Activated CD4-positive, alpha-beta memory T cell treated with anti-CD3 and anti-CD28 coated beads, Interleukin-2, amount 10 ng/mL, durations not matched to agents 7 days and 5 days (primary cell): ENCODE measurements at regions of chr12 and their contacts with region 1.

Region 1: GRCh38 chr12:1993341-1993740 is 10.9 kb downstream of the DCP1B start:
- DNase-seq: no peak
- H3K4me3 Mint-ChIP-seq: no peak overlapping the region
- H3K27ac Mint-ChIP-seq: peak overlapping the region; percentile 52
- H3K4me1 Mint-ChIP-seq: peaks cover 45% of the 10 kb centered on the region
- H3K27me3 Mint-ChIP-seq: no peaks in the 10 kb centered on the region

Region 2: DNA sequence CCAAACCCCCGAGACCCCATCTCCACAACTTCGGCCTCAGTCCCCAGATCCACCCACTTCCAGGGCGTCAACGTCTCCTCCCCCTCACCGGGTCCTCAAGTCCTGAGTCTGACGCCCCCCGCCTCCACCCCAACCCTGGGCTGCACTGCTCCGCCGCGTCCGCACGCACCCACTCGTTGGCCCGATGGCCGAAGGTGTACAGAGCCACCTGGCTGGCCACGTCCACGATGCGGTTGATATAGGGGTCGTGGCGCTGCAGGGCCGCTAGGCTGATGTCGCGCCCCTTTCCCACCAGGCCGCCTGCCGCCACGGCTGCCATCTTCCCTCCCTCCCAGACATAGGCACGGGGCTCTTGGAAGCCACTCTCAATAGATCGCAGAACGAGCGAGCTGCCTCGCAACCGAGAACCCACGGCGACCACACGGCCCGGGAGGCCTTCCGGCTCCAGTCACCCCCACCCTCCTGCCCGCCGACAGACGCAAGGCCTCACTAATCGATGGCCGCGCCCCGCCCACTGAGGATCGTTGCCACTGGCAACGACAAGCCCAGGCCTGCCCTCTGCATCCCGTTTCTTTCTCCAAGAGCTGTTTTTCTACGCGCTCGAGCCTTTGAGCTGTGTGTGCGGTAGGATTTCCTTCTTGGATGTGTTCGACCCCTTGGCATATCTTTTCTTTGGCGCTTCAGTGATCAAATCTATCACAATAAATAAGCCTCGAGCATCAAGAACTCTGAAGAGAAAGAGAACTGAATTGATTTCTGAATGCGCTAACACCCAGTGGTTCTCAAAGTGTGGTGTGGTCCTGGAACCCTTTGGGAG is 11.0 kb after region 1 on chr12 and contains the start of gene DCP1B:
- CTCF ChIA-PET with region 1: no interaction called
- POLR2A ChIA-PET with region 1: interaction called, 38 read pairs
- DNase-seq: peak; percentile 96
- H3K4me3 Mint-ChIP-seq: peak within 1 kb of the TSS; percentile 98
- H3K27ac Mint-ChIP-seq: peak within 1 kb of the TSS; percentile 94
- H3K4me1 Mint-ChIP-seq: peaks cover 35% of the 10 kb centered on the region
- H3K27me3 Mint-ChIP-seq: no peaks in the 10 kb centered on the region
- total RNA-seq, gene DCP1B: 17.8 to 18.6 TPM